ENCODE measurements at regions of chr18 and their contacts with region 1.

Region 1: DNA sequence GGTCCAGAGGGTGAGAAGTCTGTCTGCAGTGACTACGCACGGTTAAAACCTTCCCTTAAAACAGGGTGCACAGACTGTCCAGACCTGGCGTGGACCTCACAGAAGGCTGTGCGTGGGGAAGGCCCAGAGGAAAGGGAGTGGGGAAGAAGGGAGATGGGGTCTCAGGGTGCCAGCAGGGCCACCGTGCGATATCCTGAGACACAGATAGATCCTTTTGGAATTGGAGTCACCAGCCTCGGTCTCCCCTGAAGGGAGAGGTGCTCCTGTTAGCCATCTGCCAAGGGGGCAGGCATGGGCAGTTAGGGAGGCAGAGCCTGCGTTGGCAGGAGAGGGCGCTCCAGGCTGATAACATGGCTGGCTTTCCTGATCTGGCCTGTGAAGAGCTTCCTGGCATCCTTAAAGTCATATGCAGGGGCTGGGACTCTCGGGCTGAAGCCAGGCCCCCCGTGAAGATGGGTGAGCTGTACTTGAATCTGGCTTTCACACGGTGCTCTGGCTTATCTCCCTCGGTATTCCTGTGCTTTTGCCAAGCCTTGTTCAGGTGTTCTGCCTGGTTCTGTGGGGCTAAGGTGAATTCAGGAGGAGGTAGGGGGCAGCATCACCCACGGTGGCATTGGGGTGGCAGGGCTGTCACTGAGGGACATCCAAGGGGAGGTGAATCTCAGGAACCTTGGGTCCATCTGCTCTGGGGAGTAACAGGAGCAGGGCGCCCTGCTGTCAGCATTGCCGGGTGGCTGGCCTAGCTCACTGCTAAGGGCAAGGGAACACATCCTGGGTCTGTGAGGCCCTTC is 107.2 kb upstream of the SMAD2 start:
- DNase-seq: peak in 1 of 3 donors; percentile 38
- ATAC-seq: peak; percentile 25 to 60 (median 42)
- H3K4me3 ChIP-seq: no peak overlapping the region
- H3K27ac ChIP-seq: no peak overlapping the region
- H3K4me1 ChIP-seq: no peaks in the 10 kb centered on the region
- H3K27me3 ChIP-seq: no peaks in the 10 kb centered on the region
- CTCF ChIP-seq: peak; percentile 4 to 35 (median 30)
- POLR2A ChIP-seq: no peak

Region 2: DNA sequence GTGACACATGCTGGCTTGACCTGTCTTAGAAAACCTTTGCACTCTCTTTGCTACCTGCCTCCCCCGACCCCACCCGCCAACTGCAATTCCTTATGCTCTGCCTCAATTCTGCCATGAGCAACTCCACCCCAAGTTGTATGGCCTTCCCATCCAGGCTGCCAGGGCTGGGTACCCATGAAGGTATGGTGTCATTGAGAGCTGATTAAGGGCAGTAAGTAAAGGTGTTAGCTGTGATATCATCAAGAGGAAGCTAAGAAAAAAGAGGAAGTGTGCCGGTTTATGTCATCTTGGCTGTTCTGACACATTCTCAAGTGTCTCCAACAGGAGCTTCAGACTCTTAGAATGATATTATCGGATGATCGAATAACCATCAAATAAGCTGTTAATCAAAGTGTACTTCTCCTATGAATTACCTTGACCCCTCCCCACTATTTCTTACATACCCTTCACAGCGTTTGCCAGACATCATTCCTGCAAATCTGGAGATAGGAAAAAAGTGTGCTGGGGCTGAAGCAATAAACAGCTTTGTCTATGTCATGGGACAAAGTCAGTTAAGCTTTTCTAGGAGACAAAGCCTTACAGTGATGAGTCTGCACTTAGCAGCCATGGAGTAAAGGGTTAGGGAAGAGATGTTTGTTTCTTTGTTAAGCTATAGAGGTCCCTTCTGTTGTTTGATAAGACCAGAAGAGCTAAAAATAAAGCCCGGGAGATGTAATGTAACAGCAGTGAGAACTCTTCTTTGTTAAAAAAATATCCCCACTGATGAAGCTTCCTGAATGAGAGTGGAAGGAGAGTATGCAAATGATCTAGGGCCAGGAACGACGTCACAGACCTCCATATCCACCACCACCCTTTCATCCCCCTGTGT is 66.8 kb before region 1 on chr18:
- intact Hi-C with region 1: no loop called
- DNase-seq: no peak
- ATAC-seq: peak in 1 of 4 donors; percentile 18
- H3K4me3 ChIP-seq: no peak overlapping the region
- H3K27ac ChIP-seq: no peak overlapping the region
- H3K4me1 ChIP-seq: no peaks in the 10 kb centered on the region
- H3K27me3 ChIP-seq: no peaks in the 10 kb centered on the region
- CTCF ChIP-seq: no peak
- POLR2A ChIP-seq: no peak

Region 3: DNA sequence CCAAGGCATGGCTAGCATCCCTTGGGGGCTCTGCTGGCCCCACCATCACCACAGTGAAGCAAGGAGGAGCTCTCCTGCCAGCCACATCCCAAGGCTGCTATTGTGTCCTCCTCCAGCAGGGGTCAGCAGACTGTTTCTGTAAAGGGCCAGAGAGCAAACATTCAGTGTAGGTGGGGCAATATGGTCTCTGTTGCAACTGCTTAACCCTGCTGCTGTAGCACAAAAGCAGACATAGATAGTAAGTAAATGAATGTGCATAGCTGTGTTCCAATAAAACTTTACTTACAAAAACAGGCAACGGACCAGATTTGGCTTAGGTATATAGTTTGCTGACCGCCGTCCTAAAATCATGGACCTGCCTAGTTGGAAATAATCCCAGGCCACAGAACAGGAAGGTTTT is 407.9 kb after region 1 on chr18:
- intact Hi-C with region 1: loop called in 1 of 2 experiments (anchors 5 kb)
- DNase-seq: peak; percentile 60 to 83 (median 75)
- ATAC-seq: peak; percentile 93 to 97 (median 94)
- H3K4me3 ChIP-seq: no peak overlapping the region
- H3K27ac ChIP-seq: no peak overlapping the region
- H3K4me1 ChIP-seq: peaks cover 0 to 3% (median 0%) of the 10 kb centered on the region in 4 donors
- H3K27me3 ChIP-seq: no peaks in the 10 kb centered on the region
- CTCF ChIP-seq: peak; percentile 90 to 97 (median 94)
- POLR2A ChIP-seq: no peak

Measured in right lobe of liver (tissue), 6 donors.